Activated B cell treated with CpG ODN at 0.5 μM for 24 hours (primary cell): ENCODE measurements at regions of chr14 and their contacts with region 1.

Region 1: DNA sequence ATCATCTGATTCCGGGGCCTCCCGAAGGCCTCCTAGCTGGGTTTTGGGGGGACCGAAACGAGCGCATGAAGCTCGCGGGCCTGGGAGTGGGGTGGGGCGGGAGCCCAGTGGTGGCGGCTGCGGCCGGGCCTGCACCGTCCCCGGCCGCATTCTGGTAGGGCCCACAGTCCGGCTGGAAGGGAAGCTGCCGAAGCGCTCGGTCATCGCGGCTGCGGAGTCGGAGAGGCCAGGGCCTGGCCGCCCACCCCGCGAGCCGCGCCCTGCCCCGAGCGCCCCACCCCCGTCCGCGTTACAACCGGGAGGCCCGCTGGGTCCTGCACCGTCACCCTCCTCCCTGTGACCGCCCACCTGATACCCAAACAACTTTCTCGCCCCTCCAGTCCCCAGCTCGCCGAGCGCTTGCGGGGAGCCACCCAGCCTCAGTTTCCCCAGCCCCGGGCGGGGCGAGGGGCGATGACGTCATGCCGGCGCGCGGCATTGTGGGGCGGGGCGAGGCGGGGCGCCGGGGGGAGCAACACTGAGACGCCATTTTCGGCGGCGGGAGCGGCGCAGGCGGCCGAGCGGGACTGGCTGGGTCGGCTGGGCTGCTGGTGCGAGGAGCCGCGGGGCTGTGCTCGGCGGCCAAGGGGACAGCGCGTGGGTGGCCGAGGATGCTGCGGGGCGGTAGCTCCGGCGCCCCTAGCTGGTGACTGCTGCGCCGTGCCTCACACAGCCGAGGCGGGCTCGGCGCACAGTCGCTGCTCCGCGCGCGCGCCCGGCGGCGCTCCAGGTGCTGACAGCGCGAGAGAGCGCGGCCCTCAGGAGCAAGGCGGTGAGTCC is at the start of gene KLC1:
- DNase-seq: peak; percentile 89
- ATAC-seq: peak; percentile 72
- H3K4me3 Mint-ChIP-seq: peak within 1 kb of the TSS; percentile 87
- H3K27ac Mint-ChIP-seq: peak within 1 kb of the TSS; percentile 87
- H3K4me1 Mint-ChIP-seq: peaks cover 59% of the 10 kb centered on the region
- H3K27me3 Mint-ChIP-seq: no peaks in the 10 kb centered on the region
- CTCF ChIP-seq: no peak
- total RNA-seq, gene KLC1: 126 and 153 TPM in 2 replicates

Region 2: DNA sequence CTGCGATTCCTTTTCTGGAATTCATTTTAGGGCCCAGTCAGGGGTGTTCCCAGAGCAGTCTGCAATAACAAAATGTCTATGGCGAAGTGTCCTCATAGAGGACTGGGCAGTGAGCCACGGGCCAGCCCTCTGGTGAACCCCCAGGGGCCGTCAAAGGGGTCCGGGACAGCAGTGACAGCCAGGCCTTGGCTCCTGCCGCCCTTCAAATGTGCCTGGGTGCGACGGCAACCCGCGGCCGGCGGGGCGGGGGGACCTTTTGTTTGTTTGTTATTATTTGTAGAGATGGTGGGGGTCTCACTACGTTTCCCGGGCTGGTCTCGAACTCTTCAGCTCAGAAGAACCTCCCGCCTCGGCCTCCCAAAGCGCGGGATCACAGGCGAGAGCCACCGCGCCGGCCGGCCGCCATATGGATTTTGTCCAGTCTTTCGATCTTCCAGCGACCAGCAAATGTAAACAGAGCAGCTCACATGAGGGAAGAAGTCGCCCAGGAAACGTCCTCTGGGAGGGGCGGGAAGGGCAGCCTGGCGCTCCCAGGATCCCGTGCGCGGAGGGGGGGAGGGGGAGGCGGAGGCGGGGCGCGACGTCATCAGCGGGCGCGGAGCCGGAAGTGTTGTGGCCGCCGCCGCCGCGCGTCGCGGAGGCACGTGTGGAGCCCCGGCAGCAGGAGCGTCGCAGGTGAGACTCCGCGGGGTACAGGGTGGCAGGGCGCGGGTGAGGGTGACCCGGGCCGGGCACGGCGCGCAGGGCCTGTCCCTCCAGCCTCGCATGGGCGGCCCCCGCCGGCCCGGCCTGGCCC is 100.1 kb before region 1 on chr14 and contains the start of gene TRMT61A:
- CTCF ChIA-PET with region 1: no interaction called
- POLR2A ChIA-PET with region 1: interaction called, 3 read pairs
- intact Hi-C with region 1: loop called (anchors 1 kb)
- DNase-seq: peak; percentile 65
- ATAC-seq: peak; percentile 26
- H3K4me3 Mint-ChIP-seq: peak within 1 kb of the TSS; percentile 92
- H3K27ac Mint-ChIP-seq: peak within 1 kb of the TSS; percentile 96
- H3K4me1 Mint-ChIP-seq: peaks cover 62% of the 10 kb centered on the region
- H3K27me3 Mint-ChIP-seq: no peaks in the 10 kb centered on the region
- CTCF ChIP-seq: no peak
- total RNA-seq, gene TRMT61A: 19.4 and 21.8 TPM in 2 replicates

Region 3: DNA sequence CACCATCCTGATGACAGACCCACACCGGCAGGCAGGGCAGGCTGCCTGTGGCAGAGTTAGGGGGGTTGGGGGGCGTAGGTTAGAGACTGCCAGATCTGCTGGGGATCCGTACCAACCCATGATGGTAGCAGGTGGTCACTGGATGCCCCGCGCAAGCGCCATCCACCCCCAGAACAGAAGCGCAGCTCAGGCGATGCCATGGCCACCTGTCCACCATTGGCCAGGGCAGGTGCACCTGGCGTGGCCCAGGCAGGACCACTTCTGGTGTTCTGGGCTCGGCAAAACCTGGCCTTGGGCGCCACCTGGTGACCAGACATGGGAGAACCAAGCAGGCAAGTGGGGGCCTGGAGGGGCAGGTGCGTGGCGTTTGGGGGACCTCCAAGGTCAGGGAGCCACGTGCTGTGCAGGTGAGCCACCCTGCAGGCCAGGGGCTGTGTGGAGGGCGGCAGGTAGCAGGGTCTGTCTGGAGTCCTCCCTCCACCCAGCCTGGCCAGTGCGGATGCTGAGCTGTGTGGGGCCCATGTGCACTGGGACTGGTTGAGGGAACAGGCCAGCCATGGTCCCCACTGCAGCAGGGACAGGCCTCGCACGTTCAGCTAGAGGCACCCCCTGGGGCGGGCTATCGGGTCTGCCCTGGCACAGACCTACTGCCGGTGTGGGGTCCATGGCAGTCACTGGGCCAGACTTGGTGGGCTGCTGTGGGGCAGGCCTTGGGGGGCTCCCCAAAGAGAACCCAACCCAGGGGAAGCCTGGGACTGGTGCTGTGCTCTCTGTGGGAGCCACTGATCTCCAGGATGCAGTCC is 82.0 kb before region 1 on chr14:
- CTCF ChIA-PET with region 1: no interaction called
- POLR2A ChIA-PET with region 1: no interaction called
- intact Hi-C with region 1: no loop called
- DNase-seq: peak; percentile 76
- ATAC-seq: peak; percentile 90
- H3K4me3 Mint-ChIP-seq: no peak overlapping the region
- H3K27ac Mint-ChIP-seq: no peak overlapping the region
- H3K4me1 Mint-ChIP-seq: peaks cover 2% of the 10 kb centered on the region
- H3K27me3 Mint-ChIP-seq: no peaks in the 10 kb centered on the region
- CTCF ChIP-seq: peak; percentile 63

Region 4: GRCh38 chr14:103606963-103607668 is 21.8 kb before region 1 on chr14:
- CTCF ChIA-PET with region 1: no interaction called
- POLR2A ChIA-PET with region 1: interaction called, 3 read pairs
- intact Hi-C with region 1: loop called (anchors 2 kb)
- DNase-seq: peak; percentile 25
- ATAC-seq: peak; percentile 80
- H3K4me3 Mint-ChIP-seq: peak overlapping the region; percentile 79
- H3K27ac Mint-ChIP-seq: no peak overlapping the region
- H3K4me1 Mint-ChIP-seq: peaks cover 18% of the 10 kb centered on the region
- H3K27me3 Mint-ChIP-seq: peaks cover 6% of the 10 kb centered on the region
- CTCF ChIP-seq: no peak

Region 5: DNA sequence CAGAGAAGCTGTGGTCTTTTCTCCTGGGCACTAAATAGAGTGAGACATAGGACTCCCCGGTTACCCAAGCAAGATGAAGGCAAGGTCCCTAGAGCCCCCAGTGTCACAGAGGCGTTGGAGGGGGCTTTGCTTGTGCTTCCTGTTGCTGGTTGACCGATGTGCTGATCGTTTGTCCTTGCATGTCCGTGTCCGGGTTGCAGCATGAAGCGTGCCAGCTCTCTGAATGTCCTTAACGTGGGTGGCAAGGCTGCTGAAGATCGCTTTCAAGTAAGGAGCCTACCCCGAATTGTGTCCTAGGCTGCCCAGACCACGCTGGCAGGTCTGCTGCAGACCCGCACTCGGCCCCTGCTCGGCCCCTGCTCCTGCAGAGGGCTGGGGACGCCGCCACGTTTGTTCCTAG is 63.3 kb after region 1 on chr14:
- CTCF ChIA-PET with region 1: no interaction called
- POLR2A ChIA-PET with region 1: interaction called, 3 read pairs
- intact Hi-C with region 1: loop called (anchors 5 kb)
- DNase-seq: no peak
- ATAC-seq: peak; percentile 53
- H3K4me3 Mint-ChIP-seq: peak overlapping the region; percentile 28
- H3K27ac Mint-ChIP-seq: peak overlapping the region; percentile 87
- H3K4me1 Mint-ChIP-seq: peaks cover 63% of the 10 kb centered on the region
- H3K27me3 Mint-ChIP-seq: no peaks in the 10 kb centered on the region
- CTCF ChIP-seq: no peak

Region 6: DNA sequence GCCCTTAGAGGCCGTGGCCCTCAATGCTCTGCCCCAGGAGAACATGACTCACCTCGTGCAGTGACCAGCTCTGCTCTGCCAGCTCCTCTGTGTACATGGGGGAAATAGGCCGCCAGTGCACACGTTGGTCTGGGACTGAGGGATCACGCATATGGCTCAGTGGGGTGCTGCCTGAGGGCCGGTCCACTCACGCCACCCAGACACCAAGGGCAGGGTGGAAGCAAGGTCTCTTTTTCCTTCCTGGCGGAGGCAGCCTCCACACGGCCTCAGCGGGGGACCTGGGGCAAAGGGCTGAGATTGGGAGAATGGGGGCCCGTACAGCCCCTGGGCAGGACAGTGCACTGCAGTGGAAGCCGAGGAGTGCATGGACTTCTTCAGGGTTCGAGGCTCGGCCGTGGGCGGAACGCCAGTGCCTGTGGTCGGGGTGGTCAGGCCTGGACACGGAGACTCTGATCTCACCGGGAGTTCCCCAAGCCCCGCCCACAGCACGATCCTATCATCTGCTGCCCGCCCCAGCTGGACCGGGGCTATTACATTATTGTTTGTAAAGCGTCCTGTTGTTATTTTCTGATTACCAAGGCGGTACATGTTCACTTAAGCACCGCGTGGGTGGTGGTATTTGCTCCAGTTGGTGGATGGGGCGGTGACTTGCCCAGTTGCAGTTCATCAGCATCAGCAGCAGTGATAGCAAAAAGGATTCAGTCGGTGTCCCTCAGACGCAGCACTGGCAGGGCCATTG is 260.6 kb after region 1 on chr14:
- CTCF ChIA-PET with region 1: no interaction called
- POLR2A ChIA-PET with region 1: no interaction called
- intact Hi-C with region 1: no loop called
- DNase-seq: no peak
- ATAC-seq: no peak
- H3K4me3 Mint-ChIP-seq: no peak overlapping the region
- H3K27ac Mint-ChIP-seq: no peak overlapping the region
- H3K4me1 Mint-ChIP-seq: no peaks in the 10 kb centered on the region
- H3K27me3 Mint-ChIP-seq: peaks cover 3% of the 10 kb centered on the region
- CTCF ChIP-seq: no peak

Region 7: DNA sequence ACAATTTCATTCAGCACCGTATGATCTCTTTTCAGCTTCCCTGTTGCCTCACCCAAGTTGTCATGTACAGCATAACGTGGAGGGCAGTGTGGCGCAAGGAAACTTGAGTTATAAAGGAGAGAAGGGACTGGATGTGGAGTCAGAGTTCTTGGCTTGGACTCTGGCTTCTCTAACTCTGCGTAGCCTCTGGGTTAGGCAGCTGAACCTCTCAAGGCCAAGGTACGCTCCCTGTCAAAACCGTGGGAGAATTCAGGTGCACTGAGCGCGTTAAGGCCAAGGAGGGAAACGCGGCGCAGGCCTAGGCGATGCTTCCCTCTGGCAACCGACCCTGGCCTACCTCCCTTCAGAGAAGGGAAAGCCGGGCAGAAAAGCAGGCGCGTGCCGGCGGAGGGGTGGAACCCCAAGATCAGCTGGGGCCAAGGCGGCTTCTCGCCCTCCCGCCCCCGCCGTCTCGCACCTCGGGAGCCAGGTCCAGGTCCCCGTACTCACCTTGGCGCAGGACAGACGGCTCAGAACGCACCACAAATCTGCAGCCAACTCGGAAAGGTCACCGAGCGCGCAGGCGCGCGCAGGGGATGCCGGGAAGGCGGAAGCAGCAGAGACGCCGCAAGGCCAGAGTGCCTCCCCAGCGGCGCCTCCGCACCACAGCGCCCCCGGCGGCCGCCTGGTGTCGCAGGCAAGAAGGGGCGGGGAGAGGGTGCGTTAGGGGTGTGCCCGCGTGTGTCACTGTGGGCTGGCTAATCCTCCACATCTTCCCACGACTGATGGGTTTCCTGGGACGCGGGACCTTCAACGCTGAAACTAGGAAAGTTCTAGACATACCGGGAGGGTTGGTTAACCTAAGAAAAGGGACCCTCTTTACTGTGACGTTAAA is 292.3 kb after region 1 on chr14:
- CTCF ChIA-PET with region 1: no interaction called
- POLR2A ChIA-PET with region 1: no interaction called
- intact Hi-C with region 1: loop called (anchors 2 kb)
- DNase-seq: peak; percentile 99
- ATAC-seq: peak; percentile 100
- H3K4me3 Mint-ChIP-seq: peak overlapping the region; percentile 91
- H3K27ac Mint-ChIP-seq: peak overlapping the region; percentile 66
- H3K4me1 Mint-ChIP-seq: peaks cover 15% of the 10 kb centered on the region
- H3K27me3 Mint-ChIP-seq: no peaks in the 10 kb centered on the region
- CTCF ChIP-seq: peak; percentile 96